Caco-2 (cell line): ENCODE measurements at regions of chr17 and their contacts with region 1.

Region 1: DNA sequence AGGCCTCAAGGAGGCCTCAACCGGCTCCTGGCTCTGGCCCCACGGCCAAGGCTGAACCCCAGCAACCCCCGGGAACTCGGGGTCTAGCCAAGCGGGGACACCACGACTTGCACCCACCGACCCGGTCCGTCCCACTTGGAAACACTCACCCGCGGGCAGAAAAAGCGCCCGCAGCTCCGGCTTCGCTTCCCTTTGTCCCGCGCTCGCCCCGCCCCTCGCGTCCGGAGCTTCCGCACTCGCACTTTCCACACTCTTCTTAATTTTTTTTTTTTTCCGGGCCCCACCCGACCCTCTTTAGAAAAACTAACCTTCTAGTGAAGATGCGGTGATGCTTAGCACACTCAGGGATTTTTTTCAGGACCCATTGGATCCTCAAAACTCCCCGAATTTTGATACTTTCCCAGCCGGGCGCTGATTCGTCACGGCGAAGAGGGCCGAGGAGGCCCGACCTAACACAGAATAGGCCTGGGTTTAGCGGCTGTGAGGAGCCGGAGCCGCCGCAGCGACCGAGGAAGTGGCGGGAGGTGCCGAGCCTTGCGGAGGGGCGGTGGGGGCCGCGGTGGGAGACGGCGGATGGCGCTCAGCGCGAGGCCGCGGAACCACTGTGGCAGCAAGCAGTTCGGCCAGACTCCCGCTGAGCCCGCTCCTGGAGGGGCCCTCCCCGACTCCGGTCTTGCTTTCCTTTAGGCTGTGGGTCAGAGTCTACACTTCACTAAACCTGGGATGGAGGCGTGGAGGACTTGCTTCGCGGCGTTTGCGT is at the start of gene SMARCE1:
- DNase-seq: peak; percentile 82 to 84
- H3K4me3 ChIP-seq: peak within 1 kb of the TSS; percentile 93
- H3K4me3 Mint-ChIP-seq: peak within 1 kb of the TSS; percentile 83
- H3K27ac Mint-ChIP-seq: peak within 1 kb of the TSS; percentile 97
- H3K4me1 ChIP-seq: peaks cover 12% of the 10 kb centered on the region
- H3K4me1 Mint-ChIP-seq: peaks cover 10% of the 10 kb centered on the region
- H3K27me3 ChIP-seq: no peaks in the 10 kb centered on the region
- H3K27me3 Mint-ChIP-seq: no peaks in the 10 kb centered on the region
- CTCF ChIP-seq: no peak
- total RNA-seq, gene SMARCE1: 126 and 132 TPM in 2 replicates

Region 2: DNA sequence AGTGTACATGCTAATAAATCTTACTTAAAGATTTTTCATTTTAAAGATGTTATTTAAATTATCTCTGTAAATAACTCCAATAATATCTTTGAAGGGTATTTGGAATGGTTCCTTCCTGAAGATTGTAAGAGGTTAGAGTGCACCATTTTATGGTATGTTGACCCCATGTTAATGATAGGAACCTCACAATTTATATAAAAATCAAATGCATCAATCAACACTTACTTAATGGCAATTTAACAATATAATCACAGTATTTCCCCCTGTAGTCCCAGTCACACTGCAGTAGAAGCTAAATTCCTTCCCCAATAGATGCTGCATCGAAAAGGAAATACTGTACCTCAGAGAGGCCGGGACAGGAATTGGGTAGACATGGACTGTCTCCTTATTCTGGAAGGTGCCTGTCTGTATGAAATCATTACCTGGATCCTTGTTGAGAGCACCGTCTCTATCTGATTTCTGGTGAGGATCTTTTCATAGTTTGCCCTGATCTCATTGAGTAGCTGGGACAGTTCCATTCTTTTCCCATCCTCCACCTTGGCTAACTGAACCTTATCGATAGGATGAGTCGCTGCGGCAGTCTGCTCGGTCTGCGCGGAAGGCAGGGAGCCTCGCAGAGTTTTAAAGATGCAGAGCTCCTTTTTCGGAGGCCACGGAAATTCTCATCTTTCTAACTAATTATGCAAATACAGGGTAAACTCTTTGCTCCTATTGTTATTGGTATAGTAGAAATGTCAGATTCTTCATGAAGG is 17.0 kb after region 1 on chr17 and contains the start of gene KRT222:
- CTCF ChIA-PET with region 1: no interaction called
- POLR2A ChIA-PET with region 1: no interaction called
- intact Hi-C with region 1: no loop called
- DNase-seq: no peak
- H3K4me3 ChIP-seq: peak within 1 kb of the TSS; percentile 0; the same call in 1 of the 2 replicates
- H3K4me3 Mint-ChIP-seq: peak within 1 kb of the TSS; percentile 26
- H3K27ac Mint-ChIP-seq: no peak within 1 kb of the TSS
- H3K4me1 ChIP-seq: peaks cover 14% of the 10 kb centered on the region; the same call in 1 of the 2 replicates
- H3K4me1 Mint-ChIP-seq: peaks cover 8% of the 10 kb centered on the region
- H3K27me3 ChIP-seq: no peaks in the 10 kb centered on the region
- H3K27me3 Mint-ChIP-seq: no peaks in the 10 kb centered on the region
- CTCF ChIP-seq: no peak
- total RNA-seq, gene KRT222: not detected in 2 replicates

Region 3: GRCh38 chr17:40702206-40702605 is 54.4 kb after region 1 on chr17:
- CTCF ChIA-PET with region 1: interaction called, 3 read pairs
- POLR2A ChIA-PET with region 1: no interaction called
- intact Hi-C with region 1: loop called (anchors 2 kb)
- DNase-seq: peak; percentile 46 to 61
- H3K4me3 ChIP-seq: no peak overlapping the region
- H3K4me3 Mint-ChIP-seq: peak overlapping the region; percentile 44
- H3K27ac Mint-ChIP-seq: peak overlapping the region; percentile 86
- H3K4me1 ChIP-seq: peaks cover 21% of the 10 kb centered on the region
- H3K4me1 Mint-ChIP-seq: peaks cover 23% of the 10 kb centered on the region
- H3K27me3 ChIP-seq: no peaks in the 10 kb centered on the region
- H3K27me3 Mint-ChIP-seq: no peaks in the 10 kb centered on the region
- CTCF ChIP-seq: no peak

Region 4: GRCh38 chr17:40726919-40727318 is 79.1 kb after region 1 on chr17:
- CTCF ChIA-PET with region 1: interaction called, 4 read pairs
- POLR2A ChIA-PET with region 1: no interaction called
- intact Hi-C with region 1: loop called (anchors 1 kb)
- DNase-seq: peak in 1 of 2 experiments; percentile 29
- H3K4me3 ChIP-seq: no peak overlapping the region
- H3K4me3 Mint-ChIP-seq: no peak overlapping the region
- H3K27ac Mint-ChIP-seq: no peak overlapping the region
- H3K4me1 ChIP-seq: no peaks in the 10 kb centered on the region
- H3K4me1 Mint-ChIP-seq: no peaks in the 10 kb centered on the region
- H3K27me3 ChIP-seq: no peaks in the 10 kb centered on the region; the same call in 1 of the 2 replicates
- H3K27me3 Mint-ChIP-seq: peaks cover 10% of the 10 kb centered on the region
- CTCF ChIP-seq: peak; percentile 41 to 76